ENCODE measurements at regions of chr11 and their contacts with region 1.

Region 1: GRCh38 chr11:116879800-116880625 is 42.6 kb upstream of the APOA1 start:
- DNase-seq: peak in 3 of 5 donors; percentile 37 to 93 (median 84)
- H3K4me3 ChIP-seq: no peak overlapping the region
- H3K27ac ChIP-seq: no peak overlapping the region
- H3K4me1 ChIP-seq: peaks cover 0 to 3% (median 0%) of the 10 kb centered on the region in 3 donors
- H3K27me3 ChIP-seq: no peaks in the 10 kb centered on the region
- CTCF ChIP-seq: peak; percentile 69

Region 2: GRCh38 chr11:116993599-116993998 is 113.6 kb after region 1 on chr11:
- intact Hi-C with region 1: no loop called
- DNase-seq: peak in 3 of 5 donors; percentile 48 to 82 (median 80)
- H3K4me3 ChIP-seq: no peak overlapping the region
- H3K27ac ChIP-seq: no peak overlapping the region
- H3K4me1 ChIP-seq: peaks cover 3 to 14% (median 9%) of the 10 kb centered on the region in 3 donors
- H3K27me3 ChIP-seq: no peaks in the 10 kb centered on the region
- CTCF ChIP-seq: no peak

Region 3: DNA sequence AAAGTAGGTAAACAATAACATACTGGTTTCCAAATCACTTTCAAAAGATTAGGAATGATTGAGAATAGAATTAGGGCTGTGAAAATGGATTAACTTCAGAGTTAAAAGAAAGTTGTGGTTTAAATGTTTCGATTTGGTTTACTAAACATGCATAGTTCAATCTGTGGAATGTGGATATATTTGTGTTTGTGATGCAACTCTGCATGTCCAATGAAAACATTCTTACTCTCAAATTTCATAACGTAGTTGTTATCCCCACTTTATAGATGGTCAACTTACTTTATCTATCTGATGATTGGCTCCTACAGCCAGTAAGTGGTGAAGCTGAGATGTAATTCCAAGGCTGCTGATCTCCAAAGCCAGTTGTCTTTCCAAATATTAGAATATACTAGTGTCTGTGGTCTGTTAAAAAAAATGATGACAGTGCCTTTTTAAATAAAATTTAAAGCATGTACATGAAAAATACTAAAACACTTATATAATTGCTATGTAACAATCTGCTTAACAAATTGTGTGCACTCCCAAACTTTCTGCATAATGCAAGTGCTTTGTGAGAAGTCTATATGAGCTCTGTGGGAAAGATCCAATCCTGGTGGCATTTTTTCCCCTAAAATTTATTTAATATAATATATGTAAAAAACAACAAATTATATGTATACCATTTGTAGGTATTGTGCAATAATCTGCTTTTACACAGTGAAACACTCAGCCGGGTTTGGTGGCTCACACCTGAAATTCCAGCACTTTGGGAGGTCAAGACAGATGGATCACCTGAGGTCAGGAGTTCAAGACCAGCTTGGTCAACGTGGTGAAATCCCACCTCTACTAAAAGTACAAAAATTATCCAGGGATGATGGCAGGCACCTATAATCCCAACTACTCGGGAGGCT is 227.9 kb after region 1 on chr11:
- intact Hi-C with region 1: loop called (anchors 10 kb)
- DNase-seq: no peak
- H3K4me3 ChIP-seq: no peak overlapping the region
- H3K27ac ChIP-seq: no peak overlapping the region
- H3K4me1 ChIP-seq: no peaks in the 10 kb centered on the region
- H3K27me3 ChIP-seq: no peaks in the 10 kb centered on the region
- CTCF ChIP-seq: no peak

Region 4: DNA sequence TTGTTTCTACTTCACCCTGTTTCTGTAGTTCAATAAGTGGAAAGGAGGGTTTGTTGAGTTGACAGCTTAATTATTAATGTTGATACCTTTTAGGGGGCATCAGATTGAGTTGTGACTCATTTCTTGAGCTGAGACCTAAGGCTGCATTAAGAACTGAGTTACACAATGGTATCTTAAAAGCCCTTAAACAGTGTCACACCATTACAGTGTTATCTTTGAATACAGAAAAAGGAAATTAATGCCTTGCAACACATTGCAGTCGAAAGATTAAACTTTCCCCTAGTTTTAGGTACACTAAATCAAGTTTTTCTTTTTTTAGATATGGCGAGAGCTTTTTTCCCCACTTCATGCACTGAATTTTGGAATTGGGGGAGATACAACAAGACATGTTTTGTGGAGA is 280.8 kb after region 1 on chr11:
- intact Hi-C with region 1: no loop called
- DNase-seq: no peak
- H3K4me3 ChIP-seq: no peak overlapping the region
- H3K27ac ChIP-seq: no peak overlapping the region
- H3K4me1 ChIP-seq: no peaks in the 10 kb centered on the region
- H3K27me3 ChIP-seq: no peaks in the 10 kb centered on the region
- CTCF ChIP-seq: no peak

Measured in kidney (tissue), 22 donors.